Right cardiac atrium (tissue), 5 donors: ENCODE measurements at regions of chr7 and their contacts with region 1.

Region 1: GRCh38 chr7:107150375-107151073 is 18.3 kb upstream of the HBP1 start:
- DNase-seq: peak; percentile 71 to 89 (median 72)
- ATAC-seq: peak; percentile 67 to 71
- H3K4me3 ChIP-seq: no peak overlapping the region
- H3K27ac ChIP-seq: no peak overlapping the region
- H3K4me1 ChIP-seq: no peaks in the 10 kb centered on the region
- H3K27me3 ChIP-seq: no peaks in the 10 kb centered on the region

Region 2: DNA sequence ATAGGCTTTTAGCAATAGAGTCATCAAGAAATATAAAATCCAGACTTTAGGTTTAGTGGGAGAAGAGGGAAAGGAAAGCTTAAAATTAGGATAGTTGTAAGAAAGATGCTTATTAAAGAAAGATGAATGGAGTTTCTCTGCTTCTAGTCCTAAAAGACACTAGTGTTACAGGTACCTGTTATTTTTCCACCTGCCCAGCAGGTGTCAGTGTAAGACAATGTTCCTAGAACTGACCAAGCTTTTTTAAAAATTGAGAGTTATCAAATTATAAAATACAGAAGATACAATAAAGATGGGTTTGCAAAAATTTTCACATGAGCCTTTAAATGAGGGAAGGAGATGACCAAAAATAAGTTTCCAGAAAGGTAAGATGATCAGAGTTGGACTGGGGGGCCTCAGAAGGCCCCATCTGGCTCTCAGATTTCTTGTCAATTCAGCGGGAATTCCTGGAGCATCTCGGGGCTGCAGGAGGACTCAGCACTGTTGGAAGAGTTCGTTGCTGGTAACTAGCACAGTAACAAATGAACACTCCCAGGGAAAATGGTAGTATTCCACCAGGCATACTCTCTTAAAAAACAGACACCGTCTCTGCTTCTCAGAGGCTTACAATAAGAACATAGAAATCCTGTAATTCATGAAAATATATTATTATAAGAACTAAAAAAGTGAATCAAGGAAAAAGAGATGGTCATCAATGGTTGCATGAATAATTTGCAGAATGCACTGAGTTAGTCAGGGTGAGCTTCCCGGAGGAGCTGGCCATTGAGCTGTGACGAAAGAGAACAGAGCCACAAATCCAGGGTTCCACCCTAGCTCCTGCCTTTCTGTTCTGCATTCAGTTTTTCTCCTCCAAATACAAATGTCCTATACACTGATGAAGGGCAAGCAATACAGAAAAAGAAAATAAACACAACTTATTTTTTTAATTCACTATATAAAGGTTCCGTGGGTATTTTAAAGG is 357.2 kb before region 1 on chr7:
- intact Hi-C with region 1: loop called (anchors 5 to 10 kb)
- DNase-seq: no peak
- ATAC-seq: no peak
- H3K4me3 ChIP-seq: no peak overlapping the region
- H3K27ac ChIP-seq: no peak overlapping the region
- H3K4me1 ChIP-seq: no peaks in the 10 kb centered on the region
- H3K27me3 ChIP-seq: no peaks in the 10 kb centered on the region

Region 3: GRCh38 chr7:106947244-106947728 is 203.2 kb before region 1 on chr7:
- intact Hi-C with region 1: loop called (anchors 2 to 5 kb)
- DNase-seq: peak in 2 of 3 donors; percentile 37 to 48
- ATAC-seq: peak; percentile 91 to 92
- H3K4me3 ChIP-seq: no peak overlapping the region
- H3K27ac ChIP-seq: no peak overlapping the region
- H3K4me1 ChIP-seq: no peaks in the 10 kb centered on the region
- H3K27me3 ChIP-seq: no peaks in the 10 kb centered on the region